WTC11 (cell line): ENCODE measurements at regions of chr9 and their contacts with region 1.

Region 1: DNA sequence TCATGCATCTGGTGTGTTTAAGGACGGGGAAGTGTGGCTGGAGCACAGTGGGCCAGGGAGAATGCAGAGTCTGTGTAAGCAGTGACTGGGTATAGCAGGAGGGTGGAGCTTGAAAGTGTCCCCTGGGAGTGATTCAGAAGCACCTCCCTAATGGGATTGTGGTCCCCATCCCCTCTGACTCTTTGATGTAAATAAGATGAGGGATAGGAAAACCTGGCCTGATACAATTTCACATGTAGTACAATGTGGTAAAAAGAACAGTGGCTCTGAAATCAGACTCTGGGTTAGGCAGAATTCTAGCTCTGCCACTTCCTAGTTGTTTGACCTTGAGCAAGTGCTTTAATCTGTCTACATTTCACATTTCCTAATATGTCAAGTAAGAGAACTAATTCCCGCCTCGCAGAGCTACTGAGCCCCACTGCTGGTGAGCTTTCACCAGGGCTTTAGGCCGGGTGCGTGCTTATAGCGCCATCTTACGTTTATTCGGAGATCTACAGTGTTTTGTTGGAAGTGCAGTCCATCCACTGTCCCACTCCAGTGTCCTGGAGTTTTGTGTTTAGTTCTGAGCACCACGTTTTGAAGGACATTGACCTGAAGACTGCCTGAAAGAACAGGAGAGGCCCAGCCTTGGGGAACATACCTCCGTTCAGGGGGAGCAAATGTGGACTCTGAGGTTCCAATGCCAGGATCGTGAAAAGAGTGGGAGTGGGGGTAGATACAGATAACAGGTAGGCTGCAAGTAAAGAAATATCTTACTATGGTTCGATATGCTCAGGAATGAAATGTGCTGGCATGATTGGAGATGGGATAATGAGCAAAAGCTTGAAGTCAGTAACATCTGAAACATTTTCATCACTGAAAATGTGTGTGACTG is 51.2 kb upstream of the TESK1 start:
- DNase-seq: peak; percentile 63
- ATAC-seq: peak; percentile 94
- H3K4me3 Mint-ChIP-seq: no peak overlapping the region
- H3K27ac Mint-ChIP-seq: no peak overlapping the region
- H3K4me1 Mint-ChIP-seq: no peaks in the 10 kb centered on the region
- H3K27me3 Mint-ChIP-seq: no peaks in the 10 kb centered on the region; the same call in 1 of the 2 replicates
- CTCF ChIP-seq: peak; percentile 77

Region 2: DNA sequence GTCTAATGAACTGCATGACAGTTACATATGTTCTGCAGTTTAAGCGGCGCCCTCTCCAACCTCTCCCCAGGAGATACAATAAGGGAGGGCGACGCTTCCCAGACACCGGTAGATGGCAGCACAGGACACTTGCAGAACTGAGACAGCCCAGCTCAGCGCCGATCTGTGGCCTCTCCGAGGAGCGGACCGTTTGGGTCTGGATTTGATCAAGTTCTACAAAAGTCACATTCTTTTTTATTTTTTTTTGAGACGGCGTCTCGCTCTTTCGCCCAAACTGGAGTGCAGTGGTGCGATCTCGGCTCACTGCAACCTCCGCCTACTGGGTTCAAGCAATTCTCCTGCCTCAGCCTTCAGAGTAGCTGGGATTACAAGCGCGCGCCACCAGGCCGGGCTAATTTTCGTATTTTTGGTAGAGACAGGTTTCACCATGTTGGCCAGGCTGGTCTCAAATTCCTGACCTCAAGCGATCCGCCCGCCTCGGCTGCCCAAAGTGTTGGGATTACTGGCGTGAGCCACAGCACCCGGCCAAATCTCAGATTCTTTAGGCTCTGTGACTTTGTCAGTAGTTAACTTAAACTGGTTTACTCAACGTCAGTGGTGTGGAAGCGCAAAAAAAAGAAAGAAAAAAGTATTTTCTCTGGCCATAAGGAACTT is 436.9 kb before region 1 on chr9:
- CTCF ChIA-PET with region 1: interaction called, 16 read pairs
- POLR2A ChIA-PET with region 1: no interaction called
- DNase-seq: peak; percentile 92
- ATAC-seq: peak; percentile 34
- H3K4me3 Mint-ChIP-seq: peak overlapping the region; percentile 98
- H3K27ac Mint-ChIP-seq: peak overlapping the region; percentile 96
- H3K4me1 Mint-ChIP-seq: peaks cover 28% of the 10 kb centered on the region
- H3K27me3 Mint-ChIP-seq: no peaks in the 10 kb centered on the region
- CTCF ChIP-seq: peak; percentile 69

Region 3: GRCh38 chr9:35423499-35423898 is 130.4 kb before region 1 on chr9:
- CTCF ChIA-PET with region 1: no interaction called
- POLR2A ChIA-PET with region 1: no interaction called
- DNase-seq: no peak
- ATAC-seq: no peak
- H3K4me3 Mint-ChIP-seq: no peak overlapping the region
- H3K27ac Mint-ChIP-seq: no peak overlapping the region
- H3K4me1 Mint-ChIP-seq: no peaks in the 10 kb centered on the region
- H3K27me3 Mint-ChIP-seq: peaks cover 13% of the 10 kb centered on the region
- CTCF ChIP-seq: no peak

Region 4: DNA sequence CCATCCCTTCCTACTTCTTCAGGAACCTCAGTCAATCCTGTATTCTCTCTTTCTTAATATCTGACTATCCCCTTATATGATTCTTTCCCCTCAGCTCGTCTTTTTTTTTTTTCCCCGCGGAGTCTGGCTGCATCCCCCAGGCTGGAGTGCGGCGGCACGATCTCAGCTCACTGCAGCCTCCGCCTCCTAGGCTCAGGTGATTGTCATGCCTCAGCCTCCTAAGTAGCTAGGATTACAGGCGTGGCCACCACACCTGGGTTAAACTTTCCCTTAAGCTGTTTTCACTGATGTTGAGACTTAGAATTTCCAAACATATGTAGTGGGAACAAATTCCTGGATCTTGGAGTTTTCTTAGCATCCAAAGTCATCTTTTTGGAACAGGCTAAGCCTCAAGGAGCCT is 77.3 kb before region 1 on chr9:
- CTCF ChIA-PET with region 1: interaction called, 44 read pairs
- POLR2A ChIA-PET with region 1: no interaction called
- DNase-seq: no peak
- ATAC-seq: no peak
- H3K4me3 Mint-ChIP-seq: no peak overlapping the region
- H3K27ac Mint-ChIP-seq: no peak overlapping the region
- H3K4me1 Mint-ChIP-seq: 0 out of 2 replicates have a peak, but pooled peaks cover 3% of the 10 kb centered on the region
- H3K27me3 Mint-ChIP-seq: peaks cover 12% of the 10 kb centered on the region
- CTCF ChIP-seq: no peak

Region 5: GRCh38 chr9:35489313-35490154 is 64.4 kb before region 1 on chr9 and contains the start of gene RUSC2:
- CTCF ChIA-PET with region 1: interaction called, 28 read pairs
- POLR2A ChIA-PET with region 1: no interaction called
- DNase-seq: peak; percentile 87
- ATAC-seq: peak; percentile 83
- H3K4me3 Mint-ChIP-seq: peak within 1 kb of the TSS; percentile 90
- H3K27ac Mint-ChIP-seq: peak within 1 kb of the TSS; percentile 80
- H3K4me1 Mint-ChIP-seq: peaks cover 32% of the 10 kb centered on the region
- H3K27me3 Mint-ChIP-seq: peaks cover 4% of the 10 kb centered on the region; the same call in 1 of the 2 replicates
- CTCF ChIP-seq: no peak
- total RNA-seq, gene RUSC2: 7.3 to 9.4 TPM (median 8.7 TPM) in 3 replicates

Region 6: GRCh38 chr9:35529161-35529823 is 24.6 kb before region 1 on chr9:
- CTCF ChIA-PET with region 1: interaction called, 27 read pairs
- POLR2A ChIA-PET with region 1: no interaction called
- DNase-seq: no peak
- ATAC-seq: no peak
- H3K4me3 Mint-ChIP-seq: no peak overlapping the region
- H3K27ac Mint-ChIP-seq: no peak overlapping the region
- H3K4me1 Mint-ChIP-seq: no peaks in the 10 kb centered on the region
- H3K27me3 Mint-ChIP-seq: no peaks in the 10 kb centered on the region
- CTCF ChIP-seq: no peak

Region 7: DNA sequence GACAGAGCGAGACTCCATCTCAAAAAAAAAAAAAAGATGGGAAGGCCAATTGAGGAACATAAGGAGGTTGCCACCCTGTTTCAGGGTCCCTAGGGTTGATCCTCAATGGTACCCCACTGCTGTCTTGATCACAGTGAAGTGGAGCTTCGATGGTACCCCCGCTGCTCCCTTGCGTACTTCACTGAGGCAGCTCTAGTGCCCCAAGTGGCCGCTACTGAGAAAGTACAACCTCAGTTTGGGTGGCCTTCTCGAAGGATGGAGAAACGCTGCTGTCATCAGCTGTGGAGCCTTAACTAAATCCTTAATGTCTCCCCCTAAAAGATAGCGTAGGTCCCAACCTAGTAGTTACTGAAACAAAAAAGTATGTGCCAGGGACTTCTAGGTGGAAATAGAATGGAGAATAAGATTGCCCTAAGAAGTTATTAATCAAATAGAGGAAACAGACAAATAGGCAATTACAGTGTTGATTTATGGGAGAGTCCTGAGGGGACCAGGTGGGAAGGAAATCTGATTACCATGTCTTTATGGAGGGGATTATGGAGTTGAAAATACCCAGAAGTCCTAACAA is 57.4 kb after region 1 on chr9:
- CTCF ChIA-PET with region 1: interaction called, 12 read pairs
- POLR2A ChIA-PET with region 1: no interaction called
- DNase-seq: peak; percentile 63
- ATAC-seq: peak; percentile 87
- H3K4me3 Mint-ChIP-seq: no peak overlapping the region
- H3K27ac Mint-ChIP-seq: no peak overlapping the region
- H3K4me1 Mint-ChIP-seq: peaks cover 9% of the 10 kb centered on the region
- H3K27me3 Mint-ChIP-seq: peaks cover 36% of the 10 kb centered on the region
- CTCF ChIP-seq: peak; percentile 52

Region 8: DNA sequence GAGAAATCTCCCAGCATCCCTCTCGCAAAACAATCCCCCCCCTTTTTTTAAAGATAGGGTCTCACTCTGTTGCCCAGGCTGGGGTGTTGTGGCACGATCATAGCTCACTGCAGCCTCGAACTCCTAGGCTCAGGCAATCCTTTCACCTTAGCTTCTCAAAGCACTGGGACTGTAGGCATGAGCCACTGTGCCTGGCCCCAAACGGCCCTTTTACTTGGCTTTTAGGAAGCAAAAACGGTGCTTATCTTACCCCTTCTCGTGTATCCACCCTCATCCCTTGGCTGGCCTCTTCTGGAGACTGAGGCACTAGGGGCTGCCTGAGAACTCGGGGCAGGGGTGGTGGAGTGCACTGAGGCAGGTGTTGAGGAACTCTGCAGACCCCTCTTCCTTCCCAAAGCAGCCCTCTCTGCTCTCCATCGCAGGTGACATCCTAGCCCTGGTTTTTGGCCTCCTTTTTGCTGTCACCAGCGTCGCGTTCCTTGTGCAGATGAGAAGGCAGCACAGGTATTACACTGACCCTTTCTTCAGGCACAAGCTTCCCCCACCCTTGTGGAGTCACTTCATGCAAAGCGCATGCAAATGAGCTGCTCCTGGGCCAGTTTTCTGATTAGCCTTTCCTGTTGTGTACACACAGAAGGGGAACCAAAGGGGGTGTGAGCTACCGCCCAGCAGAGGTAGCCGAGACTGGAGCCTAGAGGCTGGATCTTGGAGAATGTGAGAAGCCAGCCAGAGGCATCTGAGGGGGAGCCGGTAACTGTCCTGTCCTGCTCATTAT is 126.6 kb after region 1 on chr9:
- CTCF ChIA-PET with region 1: no interaction called
- POLR2A ChIA-PET with region 1: no interaction called
- DNase-seq: peak; percentile 70
- ATAC-seq: peak; percentile 79
- H3K4me3 Mint-ChIP-seq: no peak overlapping the region
- H3K27ac Mint-ChIP-seq: peak overlapping the region; percentile 78
- H3K4me1 Mint-ChIP-seq: peaks cover 15% of the 10 kb centered on the region
- H3K27me3 Mint-ChIP-seq: peaks cover 8% of the 10 kb centered on the region
- CTCF ChIP-seq: no peak